ENCODE measurements at regions of chr20 and their contacts with region 1.

Region 1: DNA sequence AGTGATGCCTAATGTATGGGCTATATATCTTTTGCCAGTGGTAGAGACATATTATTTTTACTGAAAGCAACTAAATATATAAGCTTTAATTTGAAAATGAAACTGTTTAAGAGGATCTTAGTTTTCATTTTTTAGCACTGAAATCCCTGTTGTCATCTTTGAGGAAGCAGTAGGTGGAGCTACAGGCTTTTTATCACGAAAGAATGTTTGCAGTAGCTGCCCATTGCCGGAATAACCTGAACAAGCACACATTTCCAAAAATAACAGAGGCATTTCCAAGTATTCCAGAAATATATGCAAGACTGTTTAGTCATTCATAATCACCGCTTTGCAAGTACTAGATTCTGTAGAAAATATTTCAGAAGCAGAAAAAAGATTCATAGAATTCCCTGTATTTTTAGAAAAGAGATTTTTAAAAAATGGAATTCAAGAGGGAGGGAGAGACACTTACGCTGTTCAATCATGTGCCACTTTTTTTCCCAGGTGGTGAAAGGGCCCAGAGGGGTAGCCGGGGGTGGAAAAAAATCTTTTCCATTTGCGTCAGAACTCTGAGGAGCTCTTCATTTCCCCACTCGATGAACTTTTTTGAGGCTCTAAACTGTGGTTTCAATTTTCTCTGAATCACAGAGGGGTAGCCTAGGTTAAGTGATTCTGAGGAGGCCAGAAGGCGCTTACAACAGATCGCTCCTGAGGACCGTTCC is 142.5 kb upstream of the FERMT1 start:
- DNase-seq: peak; percentile 72
- ATAC-seq: peak; percentile 54
- H3K4me3 ChIP-seq: peak overlapping the region; percentile 38; the same call in 1 of the 2 replicates
- H3K27ac ChIP-seq: no peak overlapping the region
- H3K4me1 ChIP-seq: 0 out of 2 replicates have a peak, but pooled peaks cover 4% of the 10 kb centered on the region
- H3K27me3 ChIP-seq: peaks cover 63% of the 10 kb centered on the region
- CTCF ChIP-seq: peak; percentile 90

Region 2: GRCh38 chr20:6200092-6200491 is 65.3 kb before region 1 on chr20:
- CTCF ChIA-PET with region 1: no interaction called
- POLR2A ChIA-PET with region 1: no interaction called
- intact Hi-C with region 1: no loop called
- DNase-seq: no peak
- ATAC-seq: no peak
- H3K4me3 ChIP-seq: no peak overlapping the region
- H3K27ac ChIP-seq: no peak overlapping the region
- H3K4me1 ChIP-seq: no peaks in the 10 kb centered on the region
- H3K27me3 ChIP-seq: peaks cover 48% of the 10 kb centered on the region
- CTCF ChIP-seq: no peak

Region 3: GRCh38 chr20:6277661-6278240 is 12.4 kb after region 1 on chr20:
- CTCF ChIA-PET with region 1: no interaction called
- POLR2A ChIA-PET with region 1: no interaction called
- intact Hi-C with region 1: no loop called
- DNase-seq: no peak
- ATAC-seq: no peak
- H3K4me3 ChIP-seq: no peak overlapping the region
- H3K27ac ChIP-seq: no peak overlapping the region
- H3K4me1 ChIP-seq: no peaks in the 10 kb centered on the region
- H3K27me3 ChIP-seq: peaks cover 65% of the 10 kb centered on the region
- CTCF ChIP-seq: no peak

Region 4: DNA sequence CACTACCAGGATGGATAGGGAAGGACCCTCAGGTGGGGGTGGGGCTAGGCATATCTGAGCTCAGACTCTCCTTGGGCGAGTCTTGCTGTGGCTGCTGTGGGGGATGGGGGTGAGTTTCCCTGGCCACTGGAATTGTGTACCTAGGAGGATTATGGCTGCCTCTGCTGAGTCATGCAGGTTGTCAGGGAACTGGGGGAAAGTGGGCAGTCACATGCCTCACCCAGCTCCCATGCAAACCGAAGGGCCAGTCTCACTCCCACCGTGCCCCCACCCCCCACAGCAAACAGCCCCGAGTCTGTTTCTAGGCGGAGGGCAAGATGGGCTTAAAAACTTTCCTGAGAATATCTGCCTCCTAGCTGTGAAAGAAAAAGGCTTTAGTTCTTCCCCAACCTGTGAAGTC is 67.8 kb after region 1 on chr20:
- CTCF ChIA-PET with region 1: no interaction called
- POLR2A ChIA-PET with region 1: no interaction called
- intact Hi-C with region 1: no loop called
- DNase-seq: peak; percentile 46
- ATAC-seq: no peak
- H3K4me3 ChIP-seq: no peak overlapping the region
- H3K27ac ChIP-seq: no peak overlapping the region
- H3K4me1 ChIP-seq: peaks cover 10% of the 10 kb centered on the region; the same call in 1 of the 2 replicates
- H3K27me3 ChIP-seq: peaks cover 29% of the 10 kb centered on the region
- CTCF ChIP-seq: no peak

Region 5: DNA sequence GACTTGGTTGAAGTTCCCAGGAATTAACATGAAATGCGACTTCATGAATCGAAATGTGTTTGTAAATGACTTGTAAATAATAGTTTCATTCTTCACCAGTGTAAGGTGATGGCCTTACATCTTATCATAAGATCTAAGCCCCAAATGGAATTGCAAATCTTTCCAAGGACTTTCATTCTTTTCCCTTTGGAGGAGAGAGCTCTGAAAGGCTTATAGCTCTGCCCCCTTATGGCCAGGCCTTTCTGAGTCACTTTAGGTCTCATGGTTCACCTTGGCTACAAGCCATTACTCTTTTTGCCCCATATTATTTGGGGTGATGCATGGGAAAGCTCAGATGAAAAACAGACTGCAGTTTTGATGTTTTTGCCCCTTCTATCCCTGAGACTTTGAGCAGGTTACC is 293.0 kb after region 1 on chr20:
- CTCF ChIA-PET with region 1: no interaction called
- POLR2A ChIA-PET with region 1: no interaction called
- intact Hi-C with region 1: loop called (anchors 10 kb)
- DNase-seq: peak; percentile 22
- ATAC-seq: no peak
- H3K4me3 ChIP-seq: no peak overlapping the region
- H3K27ac ChIP-seq: no peak overlapping the region
- H3K4me1 ChIP-seq: peaks cover 26% of the 10 kb centered on the region
- H3K27me3 ChIP-seq: no peaks in the 10 kb centered on the region
- CTCF ChIP-seq: peak; percentile 42

Region 6: DNA sequence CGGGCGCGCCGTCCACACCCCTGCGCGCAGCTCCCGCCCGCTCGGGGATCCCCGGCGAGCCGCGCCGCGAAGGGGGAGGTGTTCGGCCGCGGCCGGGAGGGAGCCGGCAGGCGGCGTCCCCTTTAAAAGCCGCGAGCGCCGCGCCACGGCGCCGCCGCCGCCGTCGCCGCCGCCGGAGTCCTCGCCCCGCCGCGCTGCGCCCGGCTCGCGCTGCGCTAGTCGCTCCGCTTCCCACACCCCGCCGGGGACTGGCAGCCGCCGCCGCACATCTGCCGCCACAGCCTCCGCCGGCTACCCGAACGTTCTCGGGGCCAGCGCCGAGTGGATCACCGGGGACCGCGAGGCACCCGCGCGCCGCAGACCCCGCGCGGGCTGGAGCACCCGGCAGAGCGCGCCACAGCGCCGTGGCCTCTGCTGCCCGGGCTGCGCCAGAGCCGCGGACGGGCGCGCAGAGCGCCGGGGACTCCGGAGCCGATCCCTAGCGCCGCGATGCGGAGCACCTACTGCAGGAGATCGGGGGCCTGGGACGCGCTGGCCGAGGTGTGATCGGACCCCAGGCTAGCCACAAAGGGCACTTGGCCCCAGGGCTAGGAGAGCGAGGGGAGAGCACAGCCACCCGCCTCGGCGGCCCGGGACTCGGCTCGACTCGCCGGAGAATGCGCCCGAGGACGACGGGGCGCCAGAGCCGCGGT is 502.3 kb after region 1 on chr20 and contains the start of gene BMP2:
- CTCF ChIA-PET with region 1: no interaction called
- POLR2A ChIA-PET with region 1: no interaction called
- intact Hi-C with region 1: loop called (anchors 1 kb)
- DNase-seq: peak; percentile 28
- ATAC-seq: peak; percentile 69
- H3K4me3 ChIP-seq: peak within 1 kb of the TSS; percentile 67
- H3K27ac ChIP-seq: no peak within 1 kb of the TSS
- H3K4me1 ChIP-seq: no peaks in the 10 kb centered on the region
- H3K27me3 ChIP-seq: peaks cover 51% of the 10 kb centered on the region
- CTCF ChIP-seq: no peak
- total RNA-seq, gene BMP2: 0.40 and 0.73 TPM in 2 replicates

Measured in PC-3 (cell line).